Dendritic cell treated with granulocyte-macrophage colony-stimulating factor and Interleukin-4, amounts not matched to agents 40 ng/mL and 50 ng/mL, for 4 days (primary cell): ENCODE measurements at regions of chr1 and their contacts with region 1.

Region 1: DNA sequence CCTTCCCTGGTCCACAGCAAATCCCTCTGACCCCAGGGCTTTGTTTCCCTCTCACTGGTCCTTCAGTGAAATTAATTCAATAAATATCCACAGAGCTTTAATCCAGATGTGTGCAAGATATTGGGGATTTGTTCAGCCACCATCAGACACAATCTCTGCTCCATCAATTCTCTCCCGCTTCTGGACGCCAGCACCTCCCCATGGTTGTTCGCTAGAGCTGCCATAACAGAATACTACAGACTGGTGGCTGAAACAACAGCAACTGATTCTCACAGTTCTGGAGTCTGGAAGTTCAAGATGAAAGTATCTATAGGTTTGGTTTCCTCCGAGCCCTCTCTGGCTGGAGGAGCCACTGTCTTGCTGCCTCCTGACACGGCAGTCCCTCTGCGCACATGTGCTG is 303.9 kb downstream of the SMYD3 start:
- H3K4me3 Mint-ChIP-seq: no peak overlapping the region
- H3K27ac Mint-ChIP-seq: peak overlapping the region; percentile 12
- H3K4me1 Mint-ChIP-seq: peaks cover 13% of the 10 kb centered on the region
- H3K27me3 Mint-ChIP-seq: no peaks in the 10 kb centered on the region

Region 2: GRCh38 chr1:246155923-246156322 is 47.3 kb before region 1 on chr1:
- intact Hi-C with region 1: loop called (anchors 5 kb)
- H3K4me3 Mint-ChIP-seq: no peak overlapping the region
- H3K27ac Mint-ChIP-seq: no peak overlapping the region
- H3K4me1 Mint-ChIP-seq: peaks cover 75% of the 10 kb centered on the region
- H3K27me3 Mint-ChIP-seq: no peaks in the 10 kb centered on the region

Region 3: DNA sequence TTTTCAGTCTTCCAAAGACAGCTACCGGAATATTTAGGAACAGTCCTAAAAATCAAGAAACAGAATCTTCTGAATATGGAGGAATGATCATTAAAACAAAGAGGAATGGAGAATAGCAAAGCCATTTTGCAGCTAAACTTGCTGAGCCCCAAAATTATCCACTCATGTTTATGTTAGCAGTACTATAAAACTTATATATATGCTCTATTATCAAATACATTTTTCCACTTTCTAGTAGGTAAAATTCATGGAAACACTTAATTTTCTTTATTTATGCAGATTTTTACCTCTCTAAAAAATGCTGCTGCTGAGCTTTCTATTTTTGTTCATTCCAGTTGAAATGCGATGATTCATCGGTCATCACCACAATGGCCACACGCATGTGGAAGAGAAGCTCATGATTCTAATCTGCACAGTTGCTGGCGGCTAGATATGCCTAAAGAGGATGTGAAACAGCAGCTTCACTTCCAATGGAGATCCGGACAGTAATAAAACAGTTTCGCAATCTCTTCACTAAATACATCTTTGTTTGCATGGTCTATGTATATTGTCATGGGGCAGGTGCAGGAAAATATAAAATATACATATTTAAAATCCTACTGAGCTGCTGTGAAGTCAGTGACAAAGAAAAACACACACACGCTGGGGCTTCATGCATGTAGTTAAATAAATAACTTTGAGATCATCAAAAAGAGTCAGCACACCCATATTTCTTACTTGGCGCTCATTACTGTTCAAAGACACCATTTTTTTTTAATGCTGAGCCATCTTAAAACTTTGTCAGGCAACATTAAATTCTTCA is 11.7 kb after region 1 on chr1:
- intact Hi-C with region 1: no loop called
- H3K4me3 Mint-ChIP-seq: no peak overlapping the region
- H3K27ac Mint-ChIP-seq: peak overlapping the region; percentile 51
- H3K4me1 Mint-ChIP-seq: peaks cover 22% of the 10 kb centered on the region
- H3K27me3 Mint-ChIP-seq: no peaks in the 10 kb centered on the region